Posterior vena cava (tissue), 2 donors: ENCODE measurements at regions of chr1 and their contacts with region 1.

Region 1: GRCh38 chr1:162689745-162690671 is 57.7 kb downstream of the DDR2 start:
- DNase-seq: no peak

Region 2: GRCh38 chr1:162633081-162633762 is 56.8 kb before region 1 on chr1:
- intact Hi-C with region 1: loop called in 1 of 2 experiments (anchors 5 kb)
- DNase-seq: no peak

Region 3: GRCh38 chr1:162710345-162710744 is 20.3 kb after region 1 on chr1:
- intact Hi-C with region 1: loop called (anchors 1 to 2 kb)
- DNase-seq: no peak